ENCODE measurements at regions of chr9 and their contacts with region 1.

Region 1: DNA sequence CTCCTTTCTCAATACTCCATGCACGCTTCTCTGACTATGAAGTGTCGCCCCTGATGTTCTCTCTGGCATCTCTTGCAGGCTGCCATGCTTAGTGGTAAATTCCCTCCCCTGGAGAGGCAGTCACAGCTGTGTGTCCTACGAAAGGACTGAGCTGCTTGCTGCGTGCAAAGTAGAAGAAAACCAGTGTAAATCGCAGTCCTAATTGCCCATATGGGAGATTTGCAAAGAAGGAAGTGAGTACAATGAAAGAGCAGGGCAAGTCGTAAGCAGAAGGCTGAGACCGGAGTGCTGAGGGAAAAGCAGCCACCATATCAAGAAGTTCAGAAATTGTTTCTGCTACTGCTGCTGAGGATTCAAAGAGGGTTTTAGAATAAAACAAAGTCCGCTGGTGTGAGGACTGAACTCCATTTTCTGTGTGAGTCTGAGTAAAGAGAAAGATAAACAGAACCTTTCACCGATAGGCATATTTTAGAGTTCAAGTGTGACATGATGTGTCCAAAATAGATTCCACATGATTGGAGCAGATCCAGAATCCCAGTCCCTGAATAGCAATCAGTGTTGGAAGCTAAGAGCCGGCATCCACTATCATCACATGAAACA is 507.8 kb upstream of the MPDZ start:
- DNase-seq: peak in 3 of 5 donors; percentile 43 to 73 (median 61)
- ATAC-seq: peak; percentile 72 to 92 (median 88)
- H3K4me3 ChIP-seq: peak overlapping the region in 10 of 12 donors; percentile 5 to 50 (median 31)
- H3K27ac ChIP-seq: peak overlapping the region; percentile 81 to 95 (median 88)
- H3K4me1 ChIP-seq: peaks cover 0 to 43% (median 21%) of the 10 kb centered on the region in 12 donors
- H3K27me3 ChIP-seq: no peaks in the 10 kb centered on the region
- CTCF ChIP-seq: no peak
- POLR2A ChIP-seq: no peak

Region 2: GRCh38 chr9:13719981-13720676 is 67.2 kb before region 1 on chr9:
- intact Hi-C with region 1: loop called in 1 of 10 experiments (anchors 10 kb)
- DNase-seq: no peak
- ATAC-seq: peak in 1 of 4 donors; percentile 41
- H3K4me3 ChIP-seq: no peak overlapping the region
- H3K27ac ChIP-seq: peak overlapping the region in 1 of 12 donors; percentile 10
- H3K4me1 ChIP-seq: peaks cover 0 to 36% (median 14%) of the 10 kb centered on the region in 12 donors
- H3K27me3 ChIP-seq: no peaks in the 10 kb centered on the region
- CTCF ChIP-seq: no peak
- POLR2A ChIP-seq: no peak

Region 3: DNA sequence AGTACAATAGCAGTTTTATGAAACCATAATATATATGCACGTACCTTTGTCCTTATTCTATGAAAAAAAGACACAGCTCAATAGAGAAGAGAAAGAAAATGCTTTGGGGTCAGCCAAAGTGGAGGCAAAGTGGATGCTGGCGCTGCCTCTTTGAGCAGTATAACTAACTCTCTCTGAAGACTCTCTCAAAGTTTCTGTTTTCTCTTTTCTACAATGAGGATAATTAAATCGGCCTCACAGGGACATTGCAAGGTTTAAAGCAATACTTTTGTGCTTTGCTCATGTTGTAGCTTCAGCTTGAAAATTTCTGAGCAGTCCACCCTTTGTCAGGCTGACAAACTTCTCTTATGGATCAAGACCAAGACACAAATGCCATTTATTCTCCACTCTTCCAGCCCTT is 52.7 kb before region 1 on chr9:
- intact Hi-C with region 1: loop called in 1 of 10 experiments (anchors 10 kb)
- DNase-seq: no peak
- ATAC-seq: no peak
- H3K4me3 ChIP-seq: no peak overlapping the region
- H3K27ac ChIP-seq: no peak overlapping the region
- H3K4me1 ChIP-seq: peaks cover 0 to 6% (median 0%) of the 10 kb centered on the region in 12 donors
- H3K27me3 ChIP-seq: no peaks in the 10 kb centered on the region
- CTCF ChIP-seq: no peak
- POLR2A ChIP-seq: no peak

Region 4: GRCh38 chr9:13758936-13759335 is 28.4 kb before region 1 on chr9:
- intact Hi-C with region 1: no loop called
- DNase-seq: peak in 4 of 5 donors; percentile 16 to 66 (median 56)
- ATAC-seq: peak in 3 of 4 donors; percentile 30 to 83 (median 52)
- H3K4me3 ChIP-seq: no peak overlapping the region
- H3K27ac ChIP-seq: no peak overlapping the region
- H3K4me1 ChIP-seq: peaks cover 0 to 6% (median 0%) of the 10 kb centered on the region in 12 donors
- H3K27me3 ChIP-seq: no peaks in the 10 kb centered on the region
- CTCF ChIP-seq: no peak
- POLR2A ChIP-seq: no peak

Region 5: GRCh38 chr9:13857521-13857920 is 70.2 kb after region 1 on chr9:
- intact Hi-C with region 1: loop called in 1 of 10 experiments (anchors 10 kb)
- DNase-seq: no peak
- ATAC-seq: no peak
- H3K4me3 ChIP-seq: no peak overlapping the region
- H3K27ac ChIP-seq: no peak overlapping the region
- H3K4me1 ChIP-seq: peaks cover 0 to 29% (median 9%) of the 10 kb centered on the region in 12 donors
- H3K27me3 ChIP-seq: no peaks in the 10 kb centered on the region
- CTCF ChIP-seq: no peak
- POLR2A ChIP-seq: no peak

Measured in heart left ventricle (tissue), 16 donors.